Heart right ventricle (tissue), 16 donors: ENCODE measurements at regions of chr1 and their contacts with region 1.

Region 1: GRCh38 chr1:206526064-206526911 is 19.0 kb downstream of the RASSF5 start:
- DNase-seq: no peak
- ATAC-seq: peak in 1 of 8 donors; percentile 31
- H3K4me3 ChIP-seq: no peak overlapping the region
- H3K27ac ChIP-seq: no peak overlapping the region
- H3K4me1 ChIP-seq: peaks cover 0 to 12% (median 0%) of the 10 kb centered on the region in 9 donors
- H3K27me3 ChIP-seq: no peaks in the 10 kb centered on the region
- CTCF ChIP-seq: no peak

Region 2: GRCh38 chr1:206419250-206419649 is 107.0 kb before region 1 on chr1:
- intact Hi-C with region 1: no loop called
- DNase-seq: no peak
- ATAC-seq: peak in 3 of 8 donors; percentile 34 to 46 (median 45)
- H3K4me3 ChIP-seq: no peak overlapping the region
- H3K27ac ChIP-seq: peak overlapping the region in 1 of 10 donors; percentile 6
- H3K4me1 ChIP-seq: peaks cover 5 to 37% (median 17%) of the 10 kb centered on the region in 9 donors
- H3K27me3 ChIP-seq: no peaks in the 10 kb centered on the region
- CTCF ChIP-seq: no peak

Region 3: DNA sequence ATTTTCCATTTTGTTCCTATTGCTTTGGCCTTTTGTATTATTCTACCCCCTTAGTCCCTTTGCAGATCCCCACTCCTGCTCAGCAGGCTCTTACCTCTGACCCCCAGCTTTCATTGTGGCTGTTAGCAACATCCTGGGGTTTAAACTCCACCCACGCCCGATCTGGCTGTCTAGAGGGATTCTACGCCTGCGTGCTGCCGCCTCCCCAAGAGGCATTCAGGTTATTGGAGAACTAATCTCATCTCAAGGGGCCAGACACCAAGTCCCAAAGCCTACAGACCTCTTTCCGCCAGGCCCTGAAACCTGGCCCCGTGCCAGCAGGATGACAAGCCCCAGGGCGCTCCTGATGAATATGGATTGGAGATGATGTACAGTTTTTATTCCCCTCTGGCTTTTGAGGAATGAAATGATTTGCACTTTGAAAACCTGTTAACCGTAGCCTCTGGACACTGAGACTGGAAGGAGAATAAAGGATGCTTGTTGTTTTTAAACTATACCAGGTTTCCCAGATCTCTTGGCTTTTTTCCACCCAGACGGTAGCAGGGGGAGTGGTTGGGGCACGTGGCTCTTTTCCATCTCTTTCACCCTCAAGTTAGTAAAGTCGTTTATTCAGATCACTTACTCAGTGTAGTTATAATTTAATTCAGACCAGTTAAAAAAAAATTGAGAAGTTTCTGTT is 70.5 kb before region 1 on chr1:
- intact Hi-C with region 1: no loop called
- DNase-seq: peak in 1 of 2 donors; percentile 48
- ATAC-seq: peak in 2 of 8 donors; percentile 18 to 22
- H3K4me3 ChIP-seq: no peak overlapping the region
- H3K27ac ChIP-seq: peak overlapping the region in 1 of 10 donors; percentile 46
- H3K4me1 ChIP-seq: peaks cover 5 to 50% (median 32%) of the 10 kb centered on the region in 9 donors
- H3K27me3 ChIP-seq: no peaks in the 10 kb centered on the region
- CTCF ChIP-seq: no peak

Region 4: DNA sequence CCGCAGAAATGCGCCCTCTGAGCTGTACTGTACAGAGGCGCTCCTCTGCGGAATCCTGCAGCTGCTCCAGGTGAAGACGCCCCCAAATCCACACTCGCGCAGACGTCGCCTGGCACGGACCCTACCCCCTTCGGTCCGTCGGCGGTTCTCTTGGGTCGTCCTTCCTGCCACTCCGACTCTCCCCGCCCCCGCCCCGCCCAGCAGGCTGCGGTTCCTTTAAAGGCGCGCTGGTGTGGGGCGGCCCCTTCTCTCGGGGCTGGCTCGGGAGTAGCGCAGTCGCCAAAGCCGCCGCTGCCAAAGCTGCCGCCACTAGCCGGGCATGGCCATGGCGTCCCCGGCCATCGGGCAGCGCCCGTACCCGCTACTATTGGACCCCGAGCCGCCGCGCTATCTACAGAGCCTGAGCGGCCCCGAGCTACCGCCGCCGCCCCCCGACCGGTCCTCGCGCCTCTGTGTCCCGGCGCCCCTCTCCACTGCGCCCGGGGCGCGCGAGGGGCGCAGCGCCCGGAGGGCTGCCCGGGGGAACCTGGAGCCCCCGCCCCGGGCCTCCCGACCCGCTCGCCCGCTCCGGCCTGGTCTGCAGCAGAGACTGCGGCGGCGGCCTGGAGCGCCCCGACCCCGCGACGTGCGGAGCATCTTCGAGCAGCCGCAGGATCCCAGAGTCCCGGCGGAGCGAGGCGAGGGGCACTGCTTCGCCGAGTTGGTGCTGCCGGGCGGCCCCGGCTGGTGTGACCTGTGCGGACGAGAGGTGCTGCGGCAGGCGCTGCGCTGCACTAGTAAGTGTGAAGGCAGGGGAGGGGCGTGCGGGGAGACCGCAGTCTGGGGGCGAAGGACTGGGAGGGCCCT is 18.8 kb before region 1 on chr1 and contains the start of gene RASSF5:
- intact Hi-C with region 1: loop called in 1 of 10 experiments (anchors 2 kb)
- DNase-seq: peak; percentile 83
- ATAC-seq: peak; percentile 82 to 89 (median 86)
- H3K4me3 ChIP-seq: peak within 1 kb of the TSS; percentile 31 to 77 (median 66)
- H3K27ac ChIP-seq: peak within 1 kb of the TSS in 3 of 10 donors; percentile 10 to 69 (median 28)
- H3K4me1 ChIP-seq: peaks cover 0 to 73% (median 37%) of the 10 kb centered on the region in 9 donors
- H3K27me3 ChIP-seq: peaks cover 0 to 59% (median 12%) of the 10 kb centered on the region in 7 donors
- CTCF ChIP-seq: no peak
- total RNA-seq, gene RASSF5: 5.0 to 26.0 (median 7.0) TPM

Region 5: DNA sequence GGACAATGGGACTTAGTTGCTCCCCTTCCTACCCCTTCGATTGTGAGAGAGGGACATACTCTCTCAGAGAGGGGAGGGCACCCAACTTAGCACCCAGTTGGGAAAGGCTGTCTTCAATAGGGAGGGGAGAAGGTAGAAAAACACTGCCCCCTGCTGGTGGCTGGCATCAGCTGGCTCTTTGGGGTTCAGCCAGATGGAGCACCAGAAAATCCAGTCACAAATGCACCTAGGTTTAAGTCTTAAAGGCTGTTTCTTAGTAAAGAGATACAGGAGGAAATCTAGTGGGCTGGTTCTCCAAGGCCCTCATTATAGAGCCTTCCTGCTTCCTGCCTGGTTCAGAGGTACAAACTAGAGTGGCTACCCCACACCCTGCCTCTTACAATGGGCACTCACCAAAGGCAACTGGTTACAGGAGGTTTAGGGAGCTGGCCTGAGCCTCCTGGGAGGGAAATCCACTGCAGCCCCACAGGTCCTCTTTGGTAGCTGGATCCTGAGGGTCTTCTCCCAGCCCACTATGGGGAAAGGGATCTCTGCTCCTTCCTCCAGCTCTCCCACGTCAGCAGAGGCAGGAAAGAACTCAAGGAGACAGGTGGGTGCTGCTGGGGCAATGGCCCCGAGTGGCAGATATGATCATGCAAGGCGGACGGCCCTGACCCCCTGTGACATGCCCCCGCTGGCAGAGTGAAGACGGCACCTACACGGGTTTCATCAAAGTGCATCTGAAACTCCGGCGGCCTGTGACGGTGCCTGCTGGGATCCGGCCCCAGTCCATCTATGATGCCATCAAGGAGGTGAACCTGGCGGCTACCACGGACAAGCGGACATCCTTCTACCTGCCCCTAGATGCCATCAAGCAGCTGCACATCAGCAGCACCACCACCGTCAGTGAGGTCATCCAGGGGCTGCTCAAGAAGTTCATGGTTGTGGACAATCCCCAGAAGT is 57.7 kb after region 1 on chr1:
- intact Hi-C with region 1: no loop called
- DNase-seq: peak; percentile 70 to 82
- ATAC-seq: peak; percentile 40 to 74 (median 56)
- H3K4me3 ChIP-seq: no peak overlapping the region
- H3K27ac ChIP-seq: peak overlapping the region in 1 of 10 donors; percentile 95
- H3K4me1 ChIP-seq: peaks cover 0 to 66% (median 15%) of the 10 kb centered on the region in 9 donors
- H3K27me3 ChIP-seq: no peaks in the 10 kb centered on the region
- CTCF ChIP-seq: peak; percentile 81 to 97 (median 93)